Naive thymus-derived CD4-positive, alpha-beta T cell (primary cell): ENCODE measurements at regions of chr2 and their contacts with region 1.

Region 1: GRCh38 chr2:134897932-134898331 is 20.7 kb upstream of the CCNT2 start:
- DNase-seq: peak in 5 of 9 donors; percentile 6 to 31 (median 20)
- ATAC-seq: no peak
- H3K4me3 ChIP-seq: no peak overlapping the region
- H3K4me3 Mint-ChIP-seq: no peak overlapping the region
- H3K27ac ChIP-seq: no peak overlapping the region
- H3K27ac Mint-ChIP-seq: no peak overlapping the region
- H3K4me1 ChIP-seq: no peaks in the 10 kb centered on the region
- H3K4me1 Mint-ChIP-seq: no peaks in the 10 kb centered on the region
- H3K27me3 ChIP-seq: no peaks in the 10 kb centered on the region
- H3K27me3 Mint-ChIP-seq: peaks cover 0 to 40% (median 0%) of the 10 kb centered on the region in 5 donors

Region 2: GRCh38 chr2:133886735-133887660 is 1010.9 kb before region 1 on chr2:
- CTCF ChIA-PET with region 1: no interaction called
- POLR2A ChIA-PET with region 1: no interaction called
- intact Hi-C with region 1: loop called (anchors 2 kb)
- DNase-seq: peak in 7 of 9 donors; percentile 11 to 44 (median 33)
- ATAC-seq: no peak
- H3K4me3 ChIP-seq: no peak overlapping the region
- H3K4me3 Mint-ChIP-seq: no peak overlapping the region
- H3K27ac ChIP-seq: no peak overlapping the region
- H3K27ac Mint-ChIP-seq: peak overlapping the region in 1 of 9 donors; percentile 68
- H3K4me1 ChIP-seq: no peaks in the 10 kb centered on the region
- H3K4me1 Mint-ChIP-seq: peaks cover 0 to 2% (median 0%) of the 10 kb centered on the region in 7 donors
- H3K27me3 ChIP-seq: no peaks in the 10 kb centered on the region
- H3K27me3 Mint-ChIP-seq: peaks cover 4 to 12% (median 6%) of the 10 kb centered on the region in 5 donors

Region 3: DNA sequence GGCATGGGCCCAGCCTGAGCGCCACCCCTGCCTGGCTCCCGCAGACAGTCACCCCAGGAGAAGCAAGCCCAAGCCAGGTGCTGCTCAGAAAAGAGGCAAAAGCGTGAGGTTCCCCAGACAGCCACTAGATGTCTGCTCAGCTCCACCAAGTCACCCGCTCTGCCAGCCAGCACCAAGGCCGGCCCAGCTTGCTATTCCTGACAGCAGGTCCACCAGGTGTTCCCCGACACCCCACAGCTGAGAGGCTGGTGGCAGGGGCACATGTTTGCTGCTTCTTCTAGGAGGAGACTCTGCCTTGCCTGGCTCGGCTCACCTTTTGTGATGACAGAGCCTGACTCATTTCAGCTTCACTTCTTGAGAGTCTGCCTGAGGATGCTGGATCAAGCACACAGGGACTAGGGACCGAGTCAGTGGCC is 437.3 kb before region 1 on chr2:
- CTCF ChIA-PET with region 1: interaction called, 5 read pairs
- POLR2A ChIA-PET with region 1: no interaction called
- intact Hi-C with region 1: loop called in 1 of 2 experiments (anchors 1 kb)
- DNase-seq: peak in 6 of 9 donors; percentile 12 to 33 (median 21)
- ATAC-seq: peak; percentile 41
- H3K4me3 ChIP-seq: no peak overlapping the region
- H3K4me3 Mint-ChIP-seq: no peak overlapping the region
- H3K27ac ChIP-seq: no peak overlapping the region
- H3K27ac Mint-ChIP-seq: no peak overlapping the region
- H3K4me1 ChIP-seq: no peaks in the 10 kb centered on the region
- H3K4me1 Mint-ChIP-seq: no peaks in the 10 kb centered on the region
- H3K27me3 ChIP-seq: no peaks in the 10 kb centered on the region
- H3K27me3 Mint-ChIP-seq: no peaks in the 10 kb centered on the region

Region 4: DNA sequence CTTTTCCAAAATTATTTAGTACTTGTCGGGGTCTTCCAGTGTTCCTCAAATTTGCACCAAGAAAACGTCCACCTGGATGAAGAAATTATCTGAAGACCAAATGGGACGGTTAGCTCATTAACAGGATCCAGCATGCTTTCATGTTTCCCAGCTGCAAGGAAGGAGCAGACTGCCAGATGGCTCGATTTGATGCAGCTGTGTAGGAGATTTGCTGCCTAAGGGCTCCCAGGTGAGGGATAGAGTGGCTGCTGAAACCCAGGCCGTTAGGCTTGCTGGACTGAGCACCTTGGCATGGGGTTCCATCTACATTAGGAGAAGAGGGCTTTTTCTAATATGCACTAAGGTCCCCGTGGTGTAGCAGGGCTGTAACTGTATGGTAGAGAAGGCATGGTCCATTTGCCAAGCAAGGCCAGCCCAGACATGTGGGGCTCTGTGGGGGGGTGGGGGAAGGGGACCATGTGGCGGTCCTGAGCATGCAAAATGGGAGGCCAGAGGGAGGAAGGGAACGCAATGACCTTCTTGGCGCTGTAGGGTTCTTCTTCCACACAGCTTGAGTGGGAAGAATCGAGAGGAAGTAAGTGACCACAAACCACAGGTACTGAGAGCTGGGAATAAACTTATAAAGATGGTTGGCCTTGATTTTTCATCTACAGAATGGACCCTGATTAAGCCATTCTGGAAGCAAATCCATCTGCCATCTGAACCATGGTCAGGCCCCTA is 323.2 kb before region 1 on chr2:
- CTCF ChIA-PET with region 1: interaction called, 4 read pairs
- POLR2A ChIA-PET with region 1: no interaction called
- intact Hi-C with region 1: loop called in 1 of 2 experiments (anchors 2 kb)
- DNase-seq: no peak
- ATAC-seq: no peak
- H3K4me3 ChIP-seq: no peak overlapping the region
- H3K4me3 Mint-ChIP-seq: no peak overlapping the region
- H3K27ac ChIP-seq: no peak overlapping the region
- H3K27ac Mint-ChIP-seq: no peak overlapping the region
- H3K4me1 ChIP-seq: no peaks in the 10 kb centered on the region
- H3K4me1 Mint-ChIP-seq: peaks cover 0 to 1% (median 0%) of the 10 kb centered on the region in 7 donors
- H3K27me3 ChIP-seq: no peaks in the 10 kb centered on the region
- H3K27me3 Mint-ChIP-seq: peaks cover 0 to 7% (median 0%) of the 10 kb centered on the region in 5 donors

Region 5: DNA sequence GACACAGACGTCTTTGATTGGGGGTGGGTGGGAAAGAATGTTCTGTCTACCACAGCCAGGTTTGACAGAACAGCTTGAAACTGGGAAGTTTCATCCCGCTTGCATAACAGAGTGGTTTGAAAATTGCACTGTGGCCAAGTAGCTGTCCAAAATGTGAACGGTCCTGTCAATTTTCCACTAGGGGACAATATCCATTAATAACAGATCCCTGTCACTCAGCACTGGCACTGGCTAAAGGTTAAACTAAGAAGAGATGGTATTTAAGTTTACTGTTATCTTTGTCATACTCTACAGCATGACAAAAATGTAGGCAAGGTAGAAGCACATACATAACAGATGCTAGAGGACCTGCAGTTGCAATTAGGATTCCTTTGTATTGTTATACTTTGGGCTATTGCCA is 115.1 kb before region 1 on chr2:
- CTCF ChIA-PET with region 1: no interaction called
- POLR2A ChIA-PET with region 1: no interaction called
- intact Hi-C with region 1: loop called in 1 of 2 experiments (anchors 2 kb)
- DNase-seq: peak in 2 of 9 donors; percentile 10 to 18
- ATAC-seq: peak; percentile 69
- H3K4me3 ChIP-seq: no peak overlapping the region
- H3K4me3 Mint-ChIP-seq: no peak overlapping the region
- H3K27ac ChIP-seq: no peak overlapping the region
- H3K27ac Mint-ChIP-seq: no peak overlapping the region
- H3K4me1 ChIP-seq: peaks cover 0 to 7% of the 10 kb centered on the region in 2 donors
- H3K4me1 Mint-ChIP-seq: peaks cover 2 to 22% (median 10%) of the 10 kb centered on the region in 7 donors
- H3K27me3 ChIP-seq: no peaks in the 10 kb centered on the region
- H3K27me3 Mint-ChIP-seq: peaks cover 0 to 11% (median 5%) of the 10 kb centered on the region in 5 donors

Region 6: GRCh38 chr2:134943540-134943939 is 45.6 kb after region 1 on chr2:
- CTCF ChIA-PET with region 1: no interaction called
- POLR2A ChIA-PET with region 1: no interaction called
- intact Hi-C with region 1: no loop called
- DNase-seq: no peak
- ATAC-seq: peak; percentile 61
- H3K4me3 ChIP-seq: no peak overlapping the region
- H3K4me3 Mint-ChIP-seq: no peak overlapping the region
- H3K27ac ChIP-seq: no peak overlapping the region
- H3K27ac Mint-ChIP-seq: peak overlapping the region in 2 of 9 donors; percentile 42 to 64
- H3K4me1 ChIP-seq: no peaks in the 10 kb centered on the region
- H3K4me1 Mint-ChIP-seq: peaks cover 0 to 42% (median 30%) of the 10 kb centered on the region in 7 donors
- H3K27me3 ChIP-seq: no peaks in the 10 kb centered on the region
- H3K27me3 Mint-ChIP-seq: no peaks in the 10 kb centered on the region